ENCODE measurements at regions of chr17 and their contacts with region 1.

Region 1: DNA sequence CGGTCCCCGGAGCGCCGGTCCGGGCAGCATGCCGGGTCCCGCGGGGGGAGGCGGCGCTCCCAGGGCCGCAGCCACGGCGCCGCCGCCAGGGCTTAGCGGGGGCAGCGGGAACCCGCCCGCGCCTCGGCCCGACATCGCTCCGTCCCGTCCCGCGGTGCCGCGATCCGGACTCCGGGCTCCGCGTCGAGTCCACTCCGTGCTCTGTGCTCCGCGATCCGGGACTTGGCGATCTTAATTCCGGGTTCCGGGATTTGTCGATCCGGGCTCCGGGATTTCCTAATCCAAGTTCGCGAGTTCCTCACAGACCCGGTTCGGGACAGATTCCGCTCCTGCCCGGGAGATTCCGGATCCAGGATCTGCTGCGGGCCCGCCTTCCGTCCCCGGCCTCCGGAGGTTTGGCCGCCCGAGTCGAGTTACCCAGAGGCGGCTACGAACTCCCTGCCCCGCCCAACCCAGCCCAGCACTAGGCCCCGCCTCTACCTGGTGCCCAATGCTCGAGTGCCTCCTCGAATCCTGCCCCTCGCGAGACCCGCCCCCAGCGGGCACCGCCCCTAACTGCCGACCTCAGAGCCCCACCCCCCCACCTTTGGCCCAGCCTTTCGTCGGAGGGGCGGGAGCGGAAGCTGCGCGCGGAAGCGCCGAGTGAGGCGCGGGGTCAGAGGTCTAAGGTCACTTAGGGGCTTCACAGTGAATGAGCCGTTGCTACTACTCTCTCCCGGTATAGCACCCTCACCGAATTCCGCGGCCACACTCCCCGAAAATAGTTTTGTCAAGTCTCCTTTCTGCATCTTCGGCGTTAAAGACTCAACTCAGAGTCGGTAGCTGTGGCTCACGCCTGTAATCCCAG is at the start of gene SMARCD2:
- DNase-seq: peak; percentile 99
- ATAC-seq: peak; percentile 93
- H3K4me3 ChIP-seq: peak within 1 kb of the TSS; percentile 65 to 92 (median 89)
- H3K4me3 Mint-ChIP-seq: peak within 1 kb of the TSS; percentile 94
- H3K27ac ChIP-seq: peak within 1 kb of the TSS; percentile 90 to 92
- H3K27ac Mint-ChIP-seq: peak within 1 kb of the TSS; percentile 94
- H3K4me1 ChIP-seq: peaks cover 35 to 51% of the 10 kb centered on the region in 2 donors
- H3K4me1 Mint-ChIP-seq: peaks cover 43% of the 10 kb centered on the region
- H3K27me3 ChIP-seq: no peaks in the 10 kb centered on the region
- H3K27me3 Mint-ChIP-seq: no peaks in the 10 kb centered on the region
- CTCF ChIP-seq: no peak
- total RNA-seq, gene SMARCD2: 124 and 125 TPM in 2 replicates

Region 2: GRCh38 chr17:63445979-63446691 is 396.6 kb before region 1 on chr17 and contains the start of gene CYB561:
- CTCF ChIA-PET with region 1: no interaction called
- POLR2A ChIA-PET with region 1: no interaction called
- intact Hi-C with region 1: loop called (anchors 2 kb)
- DNase-seq: peak; percentile 94
- ATAC-seq: peak; percentile 73
- H3K4me3 ChIP-seq: peak within 1 kb of the TSS in 4 of 5 experiments; percentile 54 to 70 (median 61)
- H3K4me3 Mint-ChIP-seq: peak within 1 kb of the TSS; percentile 77
- H3K27ac ChIP-seq: peak within 1 kb of the TSS; percentile 38 to 79
- H3K27ac Mint-ChIP-seq: peak within 1 kb of the TSS; percentile 81
- H3K4me1 ChIP-seq: peaks cover 13 to 24% of the 10 kb centered on the region in 2 donors
- H3K4me1 Mint-ChIP-seq: peaks cover 15% of the 10 kb centered on the region
- H3K27me3 ChIP-seq: peaks cover 0 to 2% (median 0%) of the 10 kb centered on the region in 4 experiments
- H3K27me3 Mint-ChIP-seq: peaks cover 6% of the 10 kb centered on the region
- CTCF ChIP-seq: peak; percentile 59
- total RNA-seq, gene CYB561: 3.6 and 4.9 TPM in 2 replicates

Region 3: DNA sequence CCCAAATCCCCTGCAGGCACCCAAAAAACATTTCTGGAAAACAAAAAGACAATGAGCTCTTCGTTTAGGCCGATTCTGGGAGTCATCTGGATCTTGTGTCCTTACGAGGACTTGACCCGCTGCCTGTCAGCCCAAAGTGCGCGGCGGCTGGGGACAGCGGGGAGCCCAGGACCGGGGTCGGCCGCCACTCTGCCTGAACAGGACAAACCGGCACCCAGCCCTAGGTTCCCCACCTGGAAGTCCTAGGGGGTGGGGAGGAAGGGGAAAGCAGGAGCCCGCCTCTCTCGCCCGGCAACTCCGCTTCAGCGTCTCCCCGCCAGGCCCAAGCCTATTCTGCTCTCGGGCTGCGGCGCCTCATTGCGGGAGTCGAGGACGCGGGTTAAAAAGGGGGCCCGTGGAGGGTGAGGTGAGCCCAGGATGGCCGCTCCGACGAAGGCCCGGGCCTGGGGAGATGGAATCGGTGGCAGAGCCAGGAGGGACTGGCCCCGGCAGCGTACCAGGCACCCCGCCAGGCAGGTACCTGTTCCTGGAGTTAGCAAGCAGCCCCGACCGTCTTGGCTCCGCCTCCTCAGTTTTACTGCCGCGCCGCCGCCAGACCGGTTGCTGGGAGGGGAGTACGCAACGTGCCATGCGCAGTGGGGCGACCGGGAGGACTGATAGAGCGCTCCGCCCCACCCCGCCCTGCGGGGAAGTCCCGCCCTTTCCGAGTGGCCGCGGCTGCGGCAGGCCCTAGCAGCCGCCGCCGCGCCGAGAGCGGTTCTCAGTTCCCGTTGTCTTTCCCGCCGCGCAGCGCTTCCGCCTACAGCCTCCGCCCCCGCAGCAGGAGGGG is 101.3 kb before region 1 on chr17 and contains the start of gene STRADA:
- CTCF ChIA-PET with region 1: interaction called, 4 read pairs
- POLR2A ChIA-PET with region 1: interaction called, 7 read pairs
- intact Hi-C with region 1: loop called (anchors 1 kb)
- DNase-seq: peak; percentile 99
- ATAC-seq: peak; percentile 89
- H3K4me3 ChIP-seq: peak within 1 kb of the TSS; percentile 85 to 99 (median 93)
- H3K4me3 Mint-ChIP-seq: peak within 1 kb of the TSS; percentile 89
- H3K27ac ChIP-seq: peak within 1 kb of the TSS; percentile 97
- H3K27ac Mint-ChIP-seq: peak within 1 kb of the TSS; percentile 93
- H3K4me1 ChIP-seq: peaks cover 15 to 28% of the 10 kb centered on the region in 2 donors
- H3K4me1 Mint-ChIP-seq: peaks cover 28% of the 10 kb centered on the region
- H3K27me3 ChIP-seq: no peaks in the 10 kb centered on the region
- H3K27me3 Mint-ChIP-seq: no peaks in the 10 kb centered on the region
- CTCF ChIP-seq: no peak
- total RNA-seq, gene STRADA: 87.4 and 93.2 TPM in 2 replicates

Region 4: DNA sequence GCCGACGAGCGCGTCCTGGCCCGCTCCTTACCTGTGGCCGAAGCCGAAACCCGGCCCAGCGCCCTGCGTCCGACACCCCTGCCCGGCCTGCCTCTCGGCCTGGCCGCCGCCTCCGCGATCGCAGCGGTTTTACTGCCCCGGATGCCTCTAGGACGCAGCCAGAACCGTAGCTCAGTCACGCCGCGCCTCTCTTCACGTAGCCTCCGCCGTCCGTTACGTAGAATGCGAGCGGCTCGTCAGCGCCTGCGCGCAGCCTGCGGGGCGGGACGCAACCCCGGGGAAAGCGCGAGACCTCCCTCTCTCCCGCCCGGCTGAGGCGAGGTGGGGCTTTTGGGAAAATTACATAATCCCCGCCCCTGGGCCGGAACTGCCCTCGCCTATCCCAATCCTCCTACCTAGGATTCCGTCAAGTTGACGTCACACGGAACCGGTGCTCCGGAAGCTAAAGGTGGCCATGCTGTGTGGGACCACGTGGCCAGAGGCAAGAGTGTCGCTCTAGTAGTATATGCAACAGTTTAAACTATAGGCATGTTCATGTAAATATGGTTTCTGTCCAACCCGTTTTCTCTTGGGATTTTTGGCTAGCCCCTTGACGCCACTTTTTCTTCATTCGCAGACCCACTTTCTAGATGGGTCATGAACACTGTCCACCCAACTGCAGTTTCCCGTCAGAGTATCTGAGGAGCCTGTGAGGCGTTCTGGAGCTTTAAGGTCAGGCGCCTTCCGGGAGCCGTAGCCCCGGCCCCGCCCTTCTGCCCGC is 69.2 kb before region 1 on chr17 and contains the start of gene CCDC47:
- CTCF ChIA-PET with region 1: interaction called, 4 read pairs
- POLR2A ChIA-PET with region 1: interaction called, 18 read pairs
- intact Hi-C with region 1: loop called (anchors 1 kb)
- DNase-seq: peak; percentile 99
- ATAC-seq: peak; percentile 78
- H3K4me3 ChIP-seq: peak within 1 kb of the TSS; percentile 78 to 99 (median 90)
- H3K4me3 Mint-ChIP-seq: peak within 1 kb of the TSS; percentile 98
- H3K27ac ChIP-seq: peak within 1 kb of the TSS; percentile 78 to 94
- H3K27ac Mint-ChIP-seq: peak within 1 kb of the TSS; percentile 99
- H3K4me1 ChIP-seq: peaks cover 28 to 34% of the 10 kb centered on the region in 2 donors
- H3K4me1 Mint-ChIP-seq: peaks cover 51% of the 10 kb centered on the region
- H3K27me3 ChIP-seq: no peaks in the 10 kb centered on the region
- H3K27me3 Mint-ChIP-seq: no peaks in the 10 kb centered on the region
- CTCF ChIP-seq: no peak
- total RNA-seq, gene CCDC47: 36.2 and 39.7 TPM in 2 replicates

Measured in B cell (primary cell).